PC-3 (cell line): ENCODE measurements at regions of chr17 and their contacts with region 1.

Region 1: GRCh38 chr17:3738562-3739295 is 15.0 kb downstream of the HASPIN start:
- DNase-seq: peak; percentile 43
- ATAC-seq: peak; percentile 50
- H3K4me3 ChIP-seq: peak overlapping the region; percentile 59
- H3K27ac ChIP-seq: no peak overlapping the region
- H3K4me1 ChIP-seq: peaks cover 11% of the 10 kb centered on the region
- H3K27me3 ChIP-seq: no peaks in the 10 kb centered on the region
- CTCF ChIP-seq: no peak

Region 2: DNA sequence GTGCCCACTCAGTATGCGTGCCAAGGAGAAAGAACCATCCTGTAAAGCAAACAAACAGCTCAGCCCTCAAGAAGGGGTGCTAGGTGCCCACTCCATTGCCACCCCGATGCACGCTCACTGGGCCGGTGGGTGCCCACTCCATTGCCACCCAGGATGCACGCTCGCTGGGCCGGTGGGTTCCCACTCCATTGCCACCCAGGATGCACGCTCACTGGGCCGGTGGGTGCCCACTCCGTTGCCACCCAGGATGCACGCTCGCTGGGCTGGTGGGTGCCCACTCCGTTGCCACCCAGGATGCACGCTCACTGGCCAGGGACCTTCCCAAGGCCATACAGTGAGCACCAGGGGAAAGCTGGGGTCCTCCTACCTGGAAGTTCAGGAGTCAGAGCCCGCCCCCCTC is 13.1 kb after region 1 on chr17:
- CTCF ChIA-PET with region 1: interaction called, 11 read pairs
- POLR2A ChIA-PET with region 1: no interaction called
- intact Hi-C with region 1: no loop called
- DNase-seq: no peak
- ATAC-seq: no peak
- H3K4me3 ChIP-seq: no peak overlapping the region
- H3K27ac ChIP-seq: no peak overlapping the region
- H3K4me1 ChIP-seq: peaks cover 4% of the 10 kb centered on the region; the same call in 1 of the 2 replicates
- H3K27me3 ChIP-seq: no peaks in the 10 kb centered on the region
- CTCF ChIP-seq: no peak

Region 3: GRCh38 chr17:3802461-3803307 is 64.0 kb after region 1 on chr17:
- CTCF ChIA-PET with region 1: interaction called, 3 read pairs
- POLR2A ChIA-PET with region 1: no interaction called
- intact Hi-C with region 1: loop called (anchors 2 kb)
- DNase-seq: peak; percentile 79
- ATAC-seq: peak; percentile 74
- H3K4me3 ChIP-seq: no peak overlapping the region
- H3K27ac ChIP-seq: peak overlapping the region; percentile 89
- H3K4me1 ChIP-seq: peaks cover 31% of the 10 kb centered on the region
- H3K27me3 ChIP-seq: no peaks in the 10 kb centered on the region
- CTCF ChIP-seq: no peak

Region 4: GRCh38 chr17:3827124-3827773 is 88.5 kb after region 1 on chr17:
- CTCF ChIA-PET with region 1: interaction called, 6 read pairs
- POLR2A ChIA-PET with region 1: no interaction called
- intact Hi-C with region 1: loop called (anchors 1 kb)
- DNase-seq: peak; percentile 75
- ATAC-seq: 0 out of 2 replicates have a peak, but pooled peaks have one; percentile 27
- H3K4me3 ChIP-seq: no peak overlapping the region
- H3K27ac ChIP-seq: no peak overlapping the region
- H3K4me1 ChIP-seq: no peaks in the 10 kb centered on the region
- H3K27me3 ChIP-seq: no peaks in the 10 kb centered on the region
- CTCF ChIP-seq: peak; percentile 85